Caco-2 (cell line): ENCODE measurements at regions of chr4 and their contacts with region 1.

Region 1: DNA sequence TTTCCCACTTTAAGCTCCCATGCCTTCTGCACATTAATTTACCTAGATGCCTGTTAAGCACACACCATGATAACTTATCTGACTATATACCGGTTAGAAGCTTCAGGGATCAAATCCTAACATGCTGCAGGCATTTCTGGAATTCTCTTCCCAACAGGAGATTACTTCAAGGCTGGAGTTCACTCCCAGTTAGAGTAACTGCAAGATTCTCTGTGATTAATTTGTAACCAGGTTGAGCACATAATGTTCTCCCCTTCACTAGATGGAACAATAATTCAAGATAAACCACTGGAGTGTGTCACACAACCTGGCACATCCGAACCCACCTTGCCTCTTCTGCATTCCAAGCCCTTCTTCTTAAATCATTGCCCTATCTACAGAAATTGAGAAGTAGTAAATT is 11.8 kb upstream of the UGT2A3 start:
- DNase-seq: peak; percentile 29 to 42
- H3K4me3 ChIP-seq: no peak overlapping the region
- H3K4me3 Mint-ChIP-seq: peak overlapping the region; percentile 38
- H3K27ac Mint-ChIP-seq: peak overlapping the region; percentile 34
- H3K4me1 ChIP-seq: peaks cover 49% of the 10 kb centered on the region
- H3K4me1 Mint-ChIP-seq: peaks cover 34% of the 10 kb centered on the region
- H3K27me3 ChIP-seq: no peaks in the 10 kb centered on the region
- H3K27me3 Mint-ChIP-seq: no peaks in the 10 kb centered on the region
- CTCF ChIP-seq: no peak

Region 2: GRCh38 chr4:68693325-68694075 is 269.9 kb before region 1 on chr4:
- CTCF ChIA-PET with region 1: no interaction called
- POLR2A ChIA-PET with region 1: no interaction called
- intact Hi-C with region 1: loop called (anchors 1 kb)
- DNase-seq: peak; percentile 81 to 90
- H3K4me3 ChIP-seq: no peak overlapping the region
- H3K4me3 Mint-ChIP-seq: no peak overlapping the region
- H3K27ac Mint-ChIP-seq: peak overlapping the region; percentile 72
- H3K4me1 ChIP-seq: peaks cover 20% of the 10 kb centered on the region
- H3K4me1 Mint-ChIP-seq: peaks cover 6% of the 10 kb centered on the region
- H3K27me3 ChIP-seq: no peaks in the 10 kb centered on the region
- H3K27me3 Mint-ChIP-seq: no peaks in the 10 kb centered on the region
- CTCF ChIP-seq: no peak

Region 3: DNA sequence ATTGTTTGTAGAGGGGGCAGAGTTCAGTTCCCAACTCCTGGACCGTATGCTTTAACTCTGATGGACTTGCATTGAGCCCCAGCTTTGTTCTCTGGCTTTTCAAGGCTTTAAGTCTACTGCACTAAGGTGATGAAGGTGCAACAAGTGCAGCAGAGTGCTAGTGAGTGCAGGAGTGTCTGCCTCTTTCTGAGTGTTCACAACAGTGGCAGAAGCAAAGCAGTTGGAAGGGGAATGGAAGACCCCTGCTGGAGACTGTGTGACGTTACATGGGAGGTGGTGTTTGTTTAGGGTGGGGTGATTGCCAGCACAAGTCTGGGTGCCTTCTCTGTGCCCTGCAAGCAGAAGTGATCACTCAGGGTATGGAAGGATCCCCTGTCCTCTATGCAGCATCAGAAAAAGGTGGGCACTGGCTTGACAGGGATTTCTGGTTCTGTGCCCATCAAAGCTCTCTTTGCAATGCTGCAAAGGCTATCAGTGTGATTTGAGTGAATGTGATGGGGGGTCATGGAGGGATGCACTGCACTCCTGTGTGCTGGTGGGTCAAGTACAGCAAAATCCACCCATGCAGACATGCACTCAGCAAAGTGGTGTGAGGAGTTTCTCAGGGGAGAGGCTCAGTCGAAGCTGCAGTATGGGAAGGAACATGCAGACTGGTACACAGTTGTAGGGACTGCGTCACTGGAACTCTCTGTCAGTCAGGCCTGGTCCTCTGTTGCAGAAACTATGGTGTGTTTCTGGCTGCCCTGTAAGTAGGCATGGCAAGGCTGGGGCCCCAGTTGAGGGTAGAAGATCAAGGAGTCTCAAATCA is 62.0 kb after region 1 on chr4:
- CTCF ChIA-PET with region 1: no interaction called
- POLR2A ChIA-PET with region 1: no interaction called
- intact Hi-C with region 1: loop called (anchors 1 kb)
- DNase-seq: peak; percentile 39 to 47
- H3K4me3 ChIP-seq: no peak overlapping the region
- H3K4me3 Mint-ChIP-seq: no peak overlapping the region
- H3K27ac Mint-ChIP-seq: no peak overlapping the region
- H3K4me1 ChIP-seq: peaks cover 10% of the 10 kb centered on the region
- H3K4me1 Mint-ChIP-seq: peaks cover 4% of the 10 kb centered on the region
- H3K27me3 ChIP-seq: no peaks in the 10 kb centered on the region
- H3K27me3 Mint-ChIP-seq: no peaks in the 10 kb centered on the region
- CTCF ChIP-seq: peak; percentile 35 to 53

Region 4: DNA sequence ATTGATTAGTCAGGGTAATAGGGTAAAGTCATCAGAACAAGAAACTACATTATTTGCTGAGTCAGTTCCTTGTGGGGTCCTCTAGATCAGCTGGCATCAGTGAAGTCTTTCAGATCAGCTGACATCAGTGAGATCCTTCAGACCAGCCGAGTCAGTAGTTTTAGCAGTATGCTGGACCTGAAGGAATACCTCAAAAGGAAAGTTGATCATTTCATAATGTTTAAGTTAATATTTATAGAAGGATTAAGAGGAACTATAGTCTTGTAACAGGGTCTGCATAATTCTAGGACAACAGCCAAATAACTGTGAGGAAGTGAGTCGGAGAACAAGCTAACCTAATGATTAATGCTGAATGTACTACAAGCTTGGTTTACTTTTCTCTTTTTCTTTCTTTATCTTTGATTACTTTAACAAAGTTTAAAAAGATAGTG is 131.9 kb after region 1 on chr4:
- CTCF ChIA-PET with region 1: no interaction called
- POLR2A ChIA-PET with region 1: interaction called, 13 read pairs
- intact Hi-C with region 1: loop called (anchors 2 kb)
- DNase-seq: no peak
- H3K4me3 ChIP-seq: no peak overlapping the region
- H3K4me3 Mint-ChIP-seq: no peak overlapping the region
- H3K27ac Mint-ChIP-seq: peak overlapping the region; percentile 81
- H3K4me1 ChIP-seq: peaks cover 31% of the 10 kb centered on the region
- H3K4me1 Mint-ChIP-seq: peaks cover 28% of the 10 kb centered on the region
- H3K27me3 ChIP-seq: no peaks in the 10 kb centered on the region
- H3K27me3 Mint-ChIP-seq: no peaks in the 10 kb centered on the region
- CTCF ChIP-seq: no peak

Region 5: DNA sequence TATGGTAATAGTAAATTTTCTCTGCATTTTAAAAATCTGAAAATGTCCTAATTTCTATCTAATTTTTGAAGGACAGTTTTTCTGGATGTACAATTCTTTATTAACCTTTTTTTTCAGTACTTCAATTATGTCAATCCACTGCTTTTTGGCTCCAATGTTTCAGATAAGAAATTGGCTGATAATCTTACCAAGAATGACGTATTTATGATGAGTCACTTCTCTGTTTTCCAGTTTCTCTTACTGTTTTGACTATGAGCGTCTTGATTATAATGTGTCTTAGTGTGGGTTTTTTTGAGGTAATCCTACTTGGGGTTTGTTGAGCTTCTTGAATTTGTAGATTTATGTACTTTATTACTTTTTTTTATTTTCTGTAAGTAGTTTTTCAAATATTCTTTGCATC is 203.9 kb after region 1 on chr4:
- CTCF ChIA-PET with region 1: no interaction called
- POLR2A ChIA-PET with region 1: no interaction called
- intact Hi-C with region 1: loop called (anchors 5 kb)
- DNase-seq: no peak
- H3K4me3 ChIP-seq: no peak overlapping the region
- H3K4me3 Mint-ChIP-seq: no peak overlapping the region
- H3K27ac Mint-ChIP-seq: no peak overlapping the region
- H3K4me1 ChIP-seq: 0 out of 2 replicates have a peak, but pooled peaks cover 4% of the 10 kb centered on the region
- H3K4me1 Mint-ChIP-seq: peaks cover 6% of the 10 kb centered on the region
- H3K27me3 ChIP-seq: no peaks in the 10 kb centered on the region
- H3K27me3 Mint-ChIP-seq: no peaks in the 10 kb centered on the region
- CTCF ChIP-seq: no peak